ENCODE measurements at regions of chr5 and their contacts with region 1.

Region 1: DNA sequence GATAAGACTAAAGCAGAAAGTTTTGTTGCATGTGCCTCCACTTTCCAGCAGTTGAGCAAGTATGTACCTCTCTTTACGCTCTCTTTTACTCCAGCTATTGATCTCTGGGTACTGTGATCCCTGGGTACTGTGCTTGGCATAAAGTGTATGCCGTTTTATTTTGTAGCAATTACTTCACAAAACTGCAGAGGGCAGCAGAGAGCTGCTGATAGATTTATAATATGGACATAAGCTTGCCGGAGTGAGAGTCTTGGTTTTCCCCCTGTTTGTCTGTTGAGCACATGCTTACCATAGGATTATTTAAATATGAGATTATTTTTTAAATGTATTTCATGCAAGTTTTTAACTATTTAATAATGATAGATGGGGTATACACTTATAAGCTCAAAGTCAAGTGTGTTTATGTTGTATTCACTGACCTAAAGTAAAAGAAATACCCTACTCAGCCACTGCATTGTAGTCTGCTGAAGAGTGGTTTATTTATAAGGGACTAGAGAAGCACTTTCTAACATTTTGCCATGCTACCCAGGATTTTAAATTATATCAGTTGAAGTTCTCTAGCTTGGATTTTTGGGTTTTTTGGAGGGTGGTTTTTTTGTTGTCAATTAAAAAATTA is 13.0 kb downstream of the TTC1 start:
- DNase-seq: peak; percentile 58
- H3K4me3 ChIP-seq: no peak overlapping the region
- H3K27ac ChIP-seq: no peak overlapping the region
- H3K4me1 ChIP-seq: peaks cover 0 to 3% of the 10 kb centered on the region in 2 experiments; a peak in 2 of 4 replicates
- H3K27me3 ChIP-seq: no peaks in the 10 kb centered on the region
- CTCF ChIP-seq: peak; percentile 83
- EP300 ChIP-seq: no peak
- RAD21 ChIP-seq: peak; percentile 88

Region 2: GRCh38 chr5:159943326-159943725 is 78.6 kb before region 1 on chr5:
- CTCF ChIA-PET with region 1: no interaction called
- POLR2A ChIA-PET with region 1: no interaction called
- DNase-seq: no peak
- H3K4me3 ChIP-seq: no peak overlapping the region
- H3K27ac ChIP-seq: no peak overlapping the region
- H3K4me1 ChIP-seq: 0 out of 4 replicates have a peak, but pooled peaks cover 0 to 9% of the 10 kb centered on the region in 2 experiments
- H3K27me3 ChIP-seq: no peaks in the 10 kb centered on the region
- CTCF ChIP-seq: no peak
- EP300 ChIP-seq: no peak
- RAD21 ChIP-seq: no peak

Region 3: DNA sequence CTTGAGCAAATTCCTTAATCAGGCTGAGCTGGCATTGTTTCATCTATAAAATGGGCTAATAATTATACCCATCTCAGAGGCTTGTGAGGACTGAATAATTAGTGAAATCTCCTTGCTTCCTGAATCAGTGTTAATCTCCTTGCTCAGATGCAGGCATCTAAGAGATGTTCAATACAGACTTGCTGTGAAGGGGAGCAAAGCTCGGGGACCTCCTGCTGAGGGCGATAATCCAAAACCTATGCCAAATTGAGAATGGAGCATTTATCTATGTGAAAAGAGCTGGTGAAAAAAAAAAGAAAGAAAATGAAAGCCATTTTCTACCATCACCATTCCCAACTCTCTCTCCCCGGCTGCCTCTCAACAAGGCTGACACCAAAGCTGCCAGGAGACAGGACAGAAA is 68.3 kb before region 1 on chr5:
- CTCF ChIA-PET with region 1: no interaction called
- POLR2A ChIA-PET with region 1: no interaction called
- DNase-seq: no peak
- H3K4me3 ChIP-seq: no peak overlapping the region
- H3K27ac ChIP-seq: no peak overlapping the region
- H3K4me1 ChIP-seq: peaks cover 0 to 4% of the 10 kb centered on the region in 2 experiments; a peak in 1 of 4 replicates
- H3K27me3 ChIP-seq: no peaks in the 10 kb centered on the region
- CTCF ChIP-seq: no peak
- EP300 ChIP-seq: no peak
- RAD21 ChIP-seq: no peak

Region 4: DNA sequence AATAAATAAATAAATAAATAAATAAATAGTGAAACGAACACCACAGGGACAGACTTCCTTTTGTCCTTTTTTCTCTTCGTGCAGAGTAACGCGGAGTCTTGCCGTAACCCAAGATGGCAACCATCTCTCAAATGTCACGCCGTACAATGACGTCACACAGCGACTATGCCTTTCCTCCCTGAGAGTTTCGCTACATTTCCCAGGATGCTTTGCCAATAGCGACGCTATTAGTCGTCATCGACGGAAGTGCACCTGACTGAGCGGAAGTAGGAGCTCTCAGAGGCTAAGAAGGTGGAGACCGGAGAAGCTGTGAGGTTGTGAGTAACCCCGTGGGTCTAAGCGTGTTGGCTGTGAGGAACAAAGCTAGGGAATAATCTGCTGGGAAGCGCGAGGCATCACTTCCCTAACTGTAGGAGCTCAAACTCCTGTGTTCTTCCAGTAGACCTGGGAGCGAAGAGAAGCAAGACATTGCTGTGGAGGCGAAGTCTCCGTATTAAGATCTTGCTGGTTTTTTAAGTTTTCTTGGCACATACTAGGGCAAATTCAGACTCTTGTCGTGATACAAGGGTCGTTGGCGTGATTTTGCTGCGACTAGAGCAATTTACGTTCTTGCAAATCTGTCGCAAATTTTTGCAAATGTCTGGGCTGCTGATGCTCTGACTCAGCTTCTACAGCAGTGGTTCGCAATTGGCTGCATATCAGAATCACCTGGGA is 12.9 kb before region 1 on chr5 and contains the start of gene TTC1:
- CTCF ChIA-PET with region 1: interaction called, 19 read pairs
- POLR2A ChIA-PET with region 1: no interaction called
- DNase-seq: peak; percentile 84
- H3K4me3 ChIP-seq: peak within 1 kb of the TSS; percentile 83 to 94
- H3K27ac ChIP-seq: peak within 1 kb of the TSS; percentile 67 to 77
- H3K4me1 ChIP-seq: peaks cover 9 to 15% of the 10 kb centered on the region in 2 experiments; a peak in 3 of 4 replicates
- H3K27me3 ChIP-seq: no peaks in the 10 kb centered on the region
- CTCF ChIP-seq: no peak
- EP300 ChIP-seq: no peak
- RAD21 ChIP-seq: no peak
- polyA plus RNA-seq, gene TTC1: 37.0 and 42.1 TPM in 2 replicates

Region 5: DNA sequence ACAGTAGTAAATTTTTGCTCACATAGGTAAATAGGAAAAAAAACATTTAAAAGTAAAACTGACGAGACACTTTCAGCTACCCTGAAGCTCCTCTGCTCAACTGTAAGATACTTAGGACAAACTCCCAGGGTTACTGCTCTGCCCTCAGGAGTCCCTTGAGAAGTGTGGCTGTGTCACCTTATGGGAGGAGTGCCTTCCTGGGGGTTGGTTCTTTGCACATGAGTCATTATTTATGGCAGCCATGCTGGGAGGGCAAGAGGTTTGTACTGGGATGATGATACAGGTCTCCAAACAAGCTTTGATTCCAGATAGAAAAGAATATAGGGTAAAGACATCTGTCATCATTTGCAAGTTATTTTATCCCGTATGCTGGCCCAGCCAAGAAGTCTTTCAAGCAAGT is 32.9 kb after region 1 on chr5:
- CTCF ChIA-PET with region 1: interaction called, 12 read pairs
- POLR2A ChIA-PET with region 1: no interaction called
- DNase-seq: no peak
- H3K4me3 ChIP-seq: no peak overlapping the region
- H3K27ac ChIP-seq: peak overlapping the region in 1 of 2 experiments; percentile 20; a peak in 1 of 4 replicates
- H3K4me1 ChIP-seq: peaks cover 0 to 5% of the 10 kb centered on the region in 2 experiments; a peak in 1 of 4 replicates
- H3K27me3 ChIP-seq: no peaks in the 10 kb centered on the region
- CTCF ChIP-seq: no peak
- EP300 ChIP-seq: no peak
- RAD21 ChIP-seq: no peak

Region 6: GRCh38 chr5:160352308-160352707 is 330.4 kb after region 1 on chr5:
- CTCF ChIA-PET with region 1: interaction called, 13 read pairs
- POLR2A ChIA-PET with region 1: no interaction called
- DNase-seq: no peak
- H3K4me3 ChIP-seq: no peak overlapping the region
- H3K27ac ChIP-seq: no peak overlapping the region
- H3K4me1 ChIP-seq: no peaks in the 10 kb centered on the region
- H3K27me3 ChIP-seq: no peaks in the 10 kb centered on the region
- CTCF ChIP-seq: no peak
- EP300 ChIP-seq: no peak
- RAD21 ChIP-seq: no peak

Region 7: DNA sequence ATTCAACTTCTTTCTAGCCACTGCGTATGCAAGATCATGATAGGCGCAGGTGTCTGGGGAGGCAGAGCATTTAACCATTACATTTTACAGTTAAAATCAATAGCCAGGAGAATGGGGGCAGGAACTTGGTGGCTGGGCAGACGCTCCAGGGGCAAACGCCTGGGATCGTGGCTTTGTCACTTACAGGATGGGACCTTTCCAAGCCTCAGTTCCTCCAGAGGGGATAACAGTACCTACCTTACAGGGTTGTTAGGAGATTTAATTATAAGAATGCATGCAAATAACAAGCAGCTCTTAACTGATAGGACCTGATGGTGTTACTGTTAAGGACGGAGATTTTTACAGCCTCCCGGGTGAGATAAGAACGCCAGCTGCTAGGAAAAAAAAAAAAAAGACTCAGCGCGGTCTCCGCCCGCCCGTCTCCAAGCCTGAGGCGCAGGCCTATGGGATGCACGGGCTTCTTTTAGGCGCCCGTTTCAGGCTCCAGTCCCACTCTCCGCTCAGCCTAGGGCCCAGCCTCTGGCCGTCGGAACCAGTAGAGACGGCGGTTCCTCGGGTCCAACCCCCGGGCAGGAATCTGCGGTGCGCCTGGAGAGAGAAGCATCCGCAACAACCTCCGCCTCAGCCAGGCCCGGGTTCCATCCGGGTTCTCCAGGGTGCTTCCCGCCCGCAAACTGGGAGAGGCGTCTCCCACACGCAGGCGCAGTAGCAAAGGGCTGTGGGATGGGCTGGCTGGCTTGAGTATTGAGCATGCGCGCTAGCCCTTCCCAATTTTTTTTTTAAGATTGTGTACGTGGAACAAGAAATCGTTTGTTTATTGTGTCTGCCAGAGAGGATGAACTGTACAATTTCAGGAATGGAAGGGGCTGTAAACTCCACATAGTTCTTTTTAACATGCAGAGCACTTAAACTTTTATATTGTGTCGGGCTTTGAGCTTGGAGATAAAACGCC is 377.7 kb after region 1 on chr5 and contains the start of gene FAM200C:
- CTCF ChIA-PET with region 1: interaction called, 99 read pairs
- POLR2A ChIA-PET with region 1: no interaction called
- DNase-seq: peak; percentile 96
- H3K4me3 ChIP-seq: peak within 1 kb of the TSS; percentile 80 to 85
- H3K27ac ChIP-seq: peak within 1 kb of the TSS; percentile 84 to 96
- H3K4me1 ChIP-seq: peaks cover 0 to 9% of the 10 kb centered on the region in 2 experiments; a peak in 2 of 4 replicates
- H3K27me3 ChIP-seq: no peaks in the 10 kb centered on the region
- CTCF ChIP-seq: no peak
- EP300 ChIP-seq: no peak
- RAD21 ChIP-seq: no peak
- polyA plus RNA-seq, gene FAM200C: 1.5 and 2.2 TPM in 2 replicates

Measured in SK-N-SH (cell line).